ENCODE measurements at regions of chr12 and their contacts with region 1.

Region 1: GRCh38 chr12:122851820-122852219 is 16.6 kb downstream of the HIP1R start:
- DNase-seq: no peak

Region 2: DNA sequence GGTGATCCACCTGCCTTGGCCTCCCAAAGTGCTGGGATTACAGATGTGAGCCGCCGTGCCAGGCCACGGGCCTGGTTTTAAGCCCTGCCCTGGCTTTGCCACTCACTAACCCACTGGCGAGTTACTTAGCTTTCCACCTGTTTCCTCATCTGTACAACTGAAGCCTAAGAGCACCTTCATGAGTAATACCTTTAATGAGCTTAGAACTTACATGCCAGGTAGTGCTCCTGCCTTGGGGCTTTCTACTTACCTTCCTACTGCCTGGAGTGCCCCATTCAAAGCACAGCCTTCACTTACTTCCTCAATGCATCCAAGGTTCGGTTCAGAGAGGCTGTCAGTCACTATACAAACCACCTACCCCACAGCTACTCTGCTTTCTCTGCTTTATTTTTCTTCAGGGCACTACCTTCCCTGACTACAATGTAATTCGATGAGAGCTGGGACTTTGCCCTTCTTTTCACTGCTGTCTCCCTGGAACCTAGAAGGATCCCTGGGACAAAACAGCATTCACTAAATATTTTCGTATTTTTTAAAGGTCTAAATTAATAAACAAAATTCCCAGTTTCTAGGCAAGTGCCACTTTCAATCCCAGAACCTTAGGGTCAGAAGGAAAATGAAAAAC is 364.9 kb before region 1 on chr12:
- in situ Hi-C with region 1: no loop called
- DNase-seq: no peak

Region 3: GRCh38 chr12:122946690-122947341 is 95.0 kb after region 1 on chr12:
- in situ Hi-C with region 1: loop called (anchors 10 kb)
- DNase-seq: peak; percentile 82

Measured in KBM-7 (cell line).